ENCODE measurements at regions of chr10 and their contacts with region 1.

Region 1: DNA sequence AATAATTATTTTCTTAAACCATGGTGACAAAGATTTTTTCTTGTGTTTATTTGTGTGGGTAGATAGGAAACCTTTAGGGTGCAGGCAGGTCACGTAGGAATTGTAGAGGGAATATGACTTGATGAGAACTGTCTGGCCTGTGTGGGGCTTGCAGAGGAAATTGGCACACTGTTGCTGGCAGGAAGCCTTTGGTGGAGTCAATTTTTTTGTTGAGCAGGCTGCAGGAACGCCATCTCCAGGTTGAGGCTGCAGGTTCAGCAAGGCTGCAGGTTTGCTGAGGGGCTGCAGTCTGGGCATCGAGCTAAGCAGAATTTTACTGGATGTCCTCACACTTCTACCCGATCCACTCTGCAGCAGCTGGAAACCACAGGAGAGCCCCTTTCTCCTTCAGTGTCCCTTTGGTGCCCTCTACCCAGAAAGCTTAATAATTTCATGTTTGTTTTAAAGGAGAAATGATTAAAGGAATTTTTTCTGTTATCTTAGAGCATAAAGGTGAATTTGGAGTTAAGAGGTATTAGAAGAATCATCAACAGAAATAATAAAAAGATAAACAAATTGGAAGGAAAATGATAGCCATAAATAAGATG is 37.0 kb downstream of the TBC1D12 start:
- DNase-seq: peak; percentile 32
- H3K4me3 ChIP-seq: no peak overlapping the region
- H3K27ac ChIP-seq: no peak overlapping the region
- H3K4me1 ChIP-seq: no peaks in the 10 kb centered on the region
- H3K27me3 ChIP-seq: no peaks in the 10 kb centered on the region
- CTCF ChIP-seq: no peak
- POLR2A ChIP-seq: no peak

Region 2: DNA sequence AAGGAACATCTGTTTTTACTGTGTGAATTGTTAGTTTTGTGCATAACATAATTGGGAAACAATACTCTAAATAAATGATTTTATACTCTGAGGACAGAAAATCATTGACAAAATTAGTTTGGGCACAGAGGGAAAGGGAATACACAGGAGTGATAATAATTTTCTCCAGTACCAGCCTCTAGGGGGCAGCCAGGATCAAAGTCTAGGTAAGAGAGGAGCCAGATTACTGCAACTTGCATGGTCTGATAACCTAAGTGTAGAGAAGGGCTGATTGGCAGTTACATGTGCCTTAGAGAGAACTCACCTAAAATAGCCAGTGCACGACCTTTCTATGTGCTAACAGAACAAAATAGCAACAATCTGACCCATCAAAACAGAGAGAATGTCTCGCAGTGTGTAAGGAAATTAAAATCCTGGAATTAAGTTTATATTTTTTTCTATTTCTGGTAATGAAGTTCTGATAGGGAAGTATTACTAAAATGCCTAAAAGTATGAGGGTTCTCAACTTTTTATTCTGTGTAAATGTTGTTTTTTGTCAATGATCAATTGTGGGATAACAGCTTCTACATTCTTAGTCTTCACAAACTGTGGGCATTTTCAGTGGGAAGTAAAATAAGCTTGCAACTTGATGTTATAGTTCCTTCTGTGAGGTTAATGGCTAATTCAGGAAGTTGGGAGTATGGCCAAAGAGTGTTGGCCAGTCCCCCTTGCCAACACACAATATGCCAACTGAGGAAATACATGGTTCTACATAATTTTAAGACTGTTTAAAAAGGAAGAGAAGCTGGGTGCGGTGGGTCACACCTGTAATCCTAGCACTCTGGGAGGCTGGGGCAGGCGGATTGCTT is 1524.7 kb before region 1 on chr10:
- CTCF ChIA-PET with region 1: no interaction called
- POLR2A ChIA-PET with region 1: no interaction called
- dilution Hi-C with region 1: no loop called
- intact Hi-C with region 1: no loop called
- DNase-seq: peak; percentile 57
- H3K4me3 ChIP-seq: no peak overlapping the region
- H3K27ac ChIP-seq: no peak overlapping the region
- H3K4me1 ChIP-seq: peaks cover 2% of the 10 kb centered on the region
- H3K27me3 ChIP-seq: no peaks in the 10 kb centered on the region
- CTCF ChIP-seq: peak; percentile 62 to 64
- POLR2A ChIP-seq: no peak

Region 3: GRCh38 chr10:94279835-94280709 is 159.3 kb before region 1 on chr10:
- CTCF ChIA-PET with region 1: interaction called, 49 read pairs
- POLR2A ChIA-PET with region 1: no interaction called
- dilution Hi-C with region 1: no loop called
- intact Hi-C with region 1: loop called (anchors 1 kb)
- DNase-seq: peak; percentile 72
- H3K4me3 ChIP-seq: no peak overlapping the region
- H3K27ac ChIP-seq: no peak overlapping the region
- H3K4me1 ChIP-seq: no peaks in the 10 kb centered on the region
- H3K27me3 ChIP-seq: peaks cover 0 to 4% of the 10 kb centered on the region in 2 experiments
- CTCF ChIP-seq: peak; percentile 92 to 93
- POLR2A ChIP-seq: no peak

Region 4: DNA sequence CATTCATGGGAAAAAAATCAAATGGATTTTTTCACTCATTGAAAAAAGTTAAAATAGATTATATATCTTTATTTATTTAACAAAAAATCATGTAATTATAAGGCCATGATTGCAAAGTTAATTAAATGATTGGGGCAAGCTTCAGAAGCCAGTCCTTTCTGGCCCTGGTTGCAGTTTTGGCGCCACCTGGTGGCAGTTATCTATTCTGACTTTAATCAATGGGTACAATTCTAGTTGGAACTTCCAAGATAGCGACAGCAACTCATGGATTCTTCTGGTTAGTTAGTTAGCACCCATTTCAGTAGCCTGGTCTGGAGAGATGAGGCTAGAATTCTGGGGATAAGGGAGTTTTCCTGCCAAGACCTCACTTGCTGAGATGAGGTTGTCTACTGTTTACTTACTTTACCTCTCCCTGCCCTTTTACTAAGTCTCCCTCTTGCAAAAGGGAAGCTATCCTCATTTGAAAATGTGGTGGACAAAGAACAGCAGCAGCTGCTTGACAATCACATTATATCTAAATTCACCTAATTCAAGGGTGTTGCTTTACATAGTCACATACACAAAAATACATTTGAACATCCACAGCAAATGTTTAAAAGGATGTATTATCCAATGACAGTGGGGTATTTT is 119.0 kb before region 1 on chr10:
- CTCF ChIA-PET with region 1: interaction called, 103 read pairs
- POLR2A ChIA-PET with region 1: no interaction called
- dilution Hi-C with region 1: no loop called
- intact Hi-C with region 1: no loop called
- DNase-seq: peak; percentile 75
- H3K4me3 ChIP-seq: no peak overlapping the region
- H3K27ac ChIP-seq: no peak overlapping the region
- H3K4me1 ChIP-seq: no peaks in the 10 kb centered on the region
- H3K27me3 ChIP-seq: no peaks in the 10 kb centered on the region
- CTCF ChIP-seq: peak; percentile 61 to 76
- POLR2A ChIP-seq: no peak

Region 5: DNA sequence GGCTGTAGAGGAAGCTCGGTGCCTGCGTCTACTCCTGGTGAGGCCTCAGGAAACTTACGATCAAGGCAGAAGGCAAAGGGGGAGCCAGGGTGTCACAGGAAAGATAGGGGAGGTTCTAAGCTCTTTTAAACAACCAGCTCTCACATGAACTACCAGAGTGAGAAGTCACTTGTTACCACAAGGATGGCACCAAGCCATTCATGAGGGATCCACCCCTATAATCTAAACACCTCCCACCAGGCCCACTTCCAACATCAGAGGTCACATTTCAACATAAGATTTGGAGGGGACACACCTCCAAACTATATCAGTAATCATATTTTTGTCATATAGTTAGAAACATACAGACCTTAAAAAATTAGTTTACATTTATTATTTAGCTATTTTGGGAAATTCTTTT is 86.0 kb before region 1 on chr10:
- CTCF ChIA-PET with region 1: interaction called, 27 read pairs
- POLR2A ChIA-PET with region 1: no interaction called
- dilution Hi-C with region 1: no loop called
- intact Hi-C with region 1: no loop called
- DNase-seq: no peak
- H3K4me3 ChIP-seq: no peak overlapping the region
- H3K27ac ChIP-seq: no peak overlapping the region
- H3K4me1 ChIP-seq: no peaks in the 10 kb centered on the region
- H3K27me3 ChIP-seq: no peaks in the 10 kb centered on the region
- CTCF ChIP-seq: no peak
- POLR2A ChIP-seq: no peak

Region 6: GRCh38 chr10:94402015-94402842 is 37.1 kb before region 1 on chr10 and contains the start of gene TBC1D12:
- CTCF ChIA-PET with region 1: interaction called, 63 read pairs
- POLR2A ChIA-PET with region 1: interaction called, 4 read pairs
- dilution Hi-C with region 1: no loop called
- intact Hi-C with region 1: loop called (anchors 1 kb)
- DNase-seq: peak; percentile 96
- H3K4me3 ChIP-seq: peak within 1 kb of the TSS; percentile 71 to 95 (median 82)
- H3K27ac ChIP-seq: peak within 1 kb of the TSS; percentile 67
- H3K4me1 ChIP-seq: peaks cover 3% of the 10 kb centered on the region
- H3K27me3 ChIP-seq: no peaks in the 10 kb centered on the region
- CTCF ChIP-seq: no peak
- POLR2A ChIP-seq: peak; percentile 83
- total RNA-seq, gene TBC1D12: 7.1 and 7.3 TPM in 2 replicates

Region 7: GRCh38 chr10:94429049-94429707 is 10.2 kb before region 1 on chr10:
- CTCF ChIA-PET with region 1: interaction called, 67 read pairs
- POLR2A ChIA-PET with region 1: no interaction called
- dilution Hi-C with region 1: no loop called
- intact Hi-C with region 1: no loop called
- DNase-seq: no peak
- H3K4me3 ChIP-seq: no peak overlapping the region
- H3K27ac ChIP-seq: no peak overlapping the region
- H3K4me1 ChIP-seq: no peaks in the 10 kb centered on the region
- H3K27me3 ChIP-seq: no peaks in the 10 kb centered on the region
- CTCF ChIP-seq: no peak
- POLR2A ChIP-seq: no peak

Region 8: GRCh38 chr10:94496010-94496409 is 56.6 kb after region 1 on chr10:
- CTCF ChIA-PET with region 1: interaction called, 10 read pairs
- POLR2A ChIA-PET with region 1: no interaction called
- dilution Hi-C with region 1: no loop called
- intact Hi-C with region 1: no loop called
- DNase-seq: peak; percentile 10
- H3K4me3 ChIP-seq: no peak overlapping the region
- H3K27ac ChIP-seq: no peak overlapping the region
- H3K4me1 ChIP-seq: peaks cover 3% of the 10 kb centered on the region
- H3K27me3 ChIP-seq: no peaks in the 10 kb centered on the region
- CTCF ChIP-seq: no peak
- POLR2A ChIP-seq: no peak

Region 9: DNA sequence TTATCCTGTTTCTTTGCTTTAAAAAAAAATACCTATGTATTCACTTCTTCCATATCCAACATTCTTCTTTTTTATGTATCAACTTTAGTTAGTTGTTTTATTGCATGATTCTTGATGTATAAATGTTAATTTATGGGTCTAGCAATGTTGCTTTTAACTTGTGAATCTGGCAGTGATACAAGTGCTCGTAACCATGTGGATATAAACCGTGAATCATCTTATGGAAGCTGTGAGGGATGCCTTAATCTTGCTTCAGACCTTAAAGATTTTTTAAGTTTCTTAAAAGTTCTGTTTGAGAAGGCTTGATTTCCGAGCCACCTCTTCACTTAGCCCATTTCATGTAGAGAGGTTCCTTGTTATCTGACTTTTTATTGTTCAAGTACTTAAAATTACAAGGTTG is 132.2 kb after region 1 on chr10:
- CTCF ChIA-PET with region 1: no interaction called
- POLR2A ChIA-PET with region 1: no interaction called
- dilution Hi-C with region 1: no loop called
- intact Hi-C with region 1: no loop called
- DNase-seq: no peak
- H3K4me3 ChIP-seq: no peak overlapping the region
- H3K27ac ChIP-seq: no peak overlapping the region
- H3K4me1 ChIP-seq: no peaks in the 10 kb centered on the region
- H3K27me3 ChIP-seq: no peaks in the 10 kb centered on the region
- CTCF ChIP-seq: no peak
- POLR2A ChIP-seq: no peak

Region 10: GRCh38 chr10:94725871-94726270 is 286.5 kb after region 1 on chr10:
- CTCF ChIA-PET with region 1: no interaction called
- POLR2A ChIA-PET with region 1: no interaction called
- dilution Hi-C with region 1: no loop called
- intact Hi-C with region 1: no loop called
- DNase-seq: no peak
- H3K4me3 ChIP-seq: no peak overlapping the region
- H3K27ac ChIP-seq: no peak overlapping the region
- H3K4me1 ChIP-seq: no peaks in the 10 kb centered on the region
- H3K27me3 ChIP-seq: no peaks in the 10 kb centered on the region
- CTCF ChIP-seq: no peak
- POLR2A ChIP-seq: no peak

Measured in endothelial cell of umbilical vein (primary cell).